Transverse colon (tissue), 4 donors: ENCODE measurements at regions of chr3 and their contacts with region 1.

Region 1: GRCh38 chr3:169227911-169228310 is 435.6 kb downstream of the MECOM start:
- DNase-seq: no peak
- H3K4me3 ChIP-seq: no peak overlapping the region
- H3K27ac ChIP-seq: no peak overlapping the region
- H3K4me1 ChIP-seq: peaks cover 0 to 9% (median 0%) of the 10 kb centered on the region in 4 donors
- H3K27me3 ChIP-seq: no peaks in the 10 kb centered on the region
- CTCF ChIP-seq: no peak
- EP300 ChIP-seq: no peak
- POLR2A ChIP-seq: no peak

Region 2: DNA sequence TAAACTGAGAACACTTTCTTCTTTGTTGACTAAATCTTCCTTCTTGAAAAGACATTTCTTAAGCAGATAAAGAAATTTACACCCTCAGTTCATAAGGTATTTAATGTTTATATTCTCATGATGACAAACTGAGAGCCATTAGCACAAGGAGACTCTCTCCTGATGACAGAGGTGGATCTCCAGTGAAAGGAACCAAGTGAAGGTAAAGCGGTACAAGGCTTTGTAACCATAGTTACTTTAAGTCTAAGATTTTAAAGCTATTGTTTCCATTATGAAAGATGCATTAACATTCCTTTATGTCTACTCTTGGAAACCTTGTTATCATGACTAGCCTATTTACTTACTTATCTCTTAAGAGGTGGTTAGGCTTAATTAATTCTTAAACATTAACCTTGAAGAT is 301.5 kb before region 1 on chr3:
- in situ Hi-C with region 1: no loop called
- intact Hi-C with region 1: no loop called
- DNase-seq: no peak
- H3K4me3 ChIP-seq: no peak overlapping the region
- H3K27ac ChIP-seq: no peak overlapping the region
- H3K4me1 ChIP-seq: no peaks in the 10 kb centered on the region
- H3K27me3 ChIP-seq: no peaks in the 10 kb centered on the region
- CTCF ChIP-seq: no peak
- EP300 ChIP-seq: no peak
- POLR2A ChIP-seq: no peak

Region 3: GRCh38 chr3:169264711-169265110 is 36.8 kb after region 1 on chr3:
- in situ Hi-C with region 1: no loop called
- intact Hi-C with region 1: no loop called
- DNase-seq: peak; percentile 66
- H3K4me3 ChIP-seq: no peak overlapping the region
- H3K27ac ChIP-seq: peak overlapping the region; percentile 19 to 49 (median 34)
- H3K4me1 ChIP-seq: peaks cover 0 to 51% (median 18%) of the 10 kb centered on the region in 4 donors
- H3K27me3 ChIP-seq: no peaks in the 10 kb centered on the region
- CTCF ChIP-seq: no peak
- EP300 ChIP-seq: no peak
- POLR2A ChIP-seq: no peak

Region 4: GRCh38 chr3:169348929-169349613 is 121.2 kb after region 1 on chr3:
- in situ Hi-C with region 1: loop called in 1 of 4 experiments (anchors 25 kb)
- intact Hi-C with region 1: no loop called
- DNase-seq: no peak
- H3K4me3 ChIP-seq: no peak overlapping the region
- H3K27ac ChIP-seq: peak overlapping the region in 3 of 4 donors; percentile 11 to 62 (median 26)
- H3K4me1 ChIP-seq: peaks cover 0 to 27% (median 4%) of the 10 kb centered on the region in 4 donors
- H3K27me3 ChIP-seq: no peaks in the 10 kb centered on the region
- CTCF ChIP-seq: no peak
- EP300 ChIP-seq: no peak
- POLR2A ChIP-seq: no peak